Aorta (tissue), 5 donors: ENCODE measurements at regions of chr19 and their contacts with region 1.

Region 1: GRCh38 chr19:19420570-19421298 is 15.3 kb downstream of the GATAD2A start:
- DNase-seq: no peak
- ATAC-seq: no peak
- H3K4me3 ChIP-seq: no peak overlapping the region
- H3K27ac ChIP-seq: no peak overlapping the region
- H3K4me1 ChIP-seq: peaks cover 0 to 2% of the 10 kb centered on the region in 2 donors
- H3K27me3 ChIP-seq: no peaks in the 10 kb centered on the region

Region 2: GRCh38 chr19:19482809-19483596 is 62.3 kb after region 1 on chr19:
- intact Hi-C with region 1: loop called in 1 of 2 experiments (anchors 5 kb)
- DNase-seq: no peak
- ATAC-seq: no peak
- H3K4me3 ChIP-seq: no peak overlapping the region
- H3K27ac ChIP-seq: no peak overlapping the region
- H3K4me1 ChIP-seq: no peaks in the 10 kb centered on the region
- H3K27me3 ChIP-seq: no peaks in the 10 kb centered on the region